HepG2 (cell line): ENCODE measurements at regions of chrX and their contacts with region 1.

Region 1: GRCh38 chrX:119235872-119236622 is at the start of gene PGRMC1:
- DNase-seq: peak; percentile 55
- ATAC-seq: peak; percentile 94
- H3K4me3 ChIP-seq: peak within 1 kb of the TSS; percentile 80
- H3K27ac ChIP-seq: peak within 1 kb of the TSS; percentile 75
- H3K4me1 ChIP-seq: peaks cover 42% of the 10 kb centered on the region
- H3K27me3 ChIP-seq: no peaks in the 10 kb centered on the region; a peak in 1 of 5 replicates
- CTCF ChIP-seq: no peak
- EP300 ChIP-seq: no peak
- POLR2A ChIP-seq: peak; percentile 87 to 95
- RAD21 ChIP-seq: no peak
- total RNA-seq, gene PGRMC1: 75.8 and 124 TPM in 2 replicates

Region 2: DNA sequence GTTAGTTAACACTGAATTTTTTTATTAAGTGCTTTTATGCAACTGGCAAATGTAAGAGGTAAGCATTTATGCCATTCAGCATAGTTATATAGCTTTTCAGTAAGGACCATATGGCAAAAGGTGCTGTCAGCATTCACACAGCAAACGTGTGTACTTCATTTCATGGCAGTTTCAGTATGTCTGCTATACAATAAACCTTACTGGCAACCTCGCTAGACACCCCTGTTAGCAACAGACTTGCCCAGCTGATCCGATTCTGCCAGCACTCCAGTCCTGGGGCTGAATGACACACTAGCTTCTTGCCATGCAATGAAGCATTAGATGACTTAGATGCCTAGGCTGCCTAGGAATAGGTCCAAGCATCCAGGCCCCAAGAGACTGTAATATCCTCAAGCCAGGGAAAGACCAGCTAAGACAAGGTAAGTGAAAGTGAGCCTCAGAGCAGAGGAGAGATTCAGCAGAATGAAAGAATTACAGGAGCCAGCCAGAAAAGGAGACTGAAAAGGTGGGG is 787.7 kb before region 1 on chrX:
- CTCF ChIA-PET with region 1: no interaction called
- POLR2A ChIA-PET with region 1: no interaction called
- in situ Hi-C with region 1: no loop called
- intact Hi-C with region 1: no loop called
- DNase-seq: no peak
- ATAC-seq: no peak
- H3K4me3 ChIP-seq: no peak overlapping the region
- H3K27ac ChIP-seq: no peak overlapping the region
- H3K4me1 ChIP-seq: no peaks in the 10 kb centered on the region
- H3K27me3 ChIP-seq: no peaks in the 10 kb centered on the region
- CTCF ChIP-seq: no peak
- EP300 ChIP-seq: no peak
- POLR2A ChIP-seq: no peak
- RAD21 ChIP-seq: no peak

Region 3: DNA sequence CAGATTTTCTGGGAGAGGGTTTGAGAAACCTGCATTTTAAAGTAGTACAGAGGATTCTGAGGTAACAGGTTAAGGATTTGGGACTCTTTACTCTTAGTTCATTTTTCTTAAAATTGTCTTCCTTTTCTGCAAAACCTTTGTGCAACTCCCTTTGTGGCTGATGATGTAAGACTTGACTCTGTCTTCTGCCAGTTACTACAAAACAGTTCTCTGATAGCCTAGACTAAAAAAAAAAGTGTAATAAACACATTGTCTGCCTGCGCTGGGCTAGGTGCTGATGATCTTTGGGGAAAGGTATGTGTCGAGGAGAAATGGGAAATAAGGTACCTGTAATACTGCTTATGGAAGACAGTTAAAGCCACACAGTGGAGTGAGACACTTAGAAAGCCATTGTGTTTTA is 479.9 kb before region 1 on chrX:
- CTCF ChIA-PET with region 1: no interaction called
- POLR2A ChIA-PET with region 1: no interaction called
- in situ Hi-C with region 1: no loop called
- intact Hi-C with region 1: loop called (anchors 5 kb)
- DNase-seq: no peak
- ATAC-seq: no peak
- H3K4me3 ChIP-seq: no peak overlapping the region
- H3K27ac ChIP-seq: no peak overlapping the region
- H3K4me1 ChIP-seq: no peaks in the 10 kb centered on the region
- H3K27me3 ChIP-seq: no peaks in the 10 kb centered on the region
- CTCF ChIP-seq: no peak
- EP300 ChIP-seq: no peak
- POLR2A ChIP-seq: no peak
- RAD21 ChIP-seq: no peak

Region 4: DNA sequence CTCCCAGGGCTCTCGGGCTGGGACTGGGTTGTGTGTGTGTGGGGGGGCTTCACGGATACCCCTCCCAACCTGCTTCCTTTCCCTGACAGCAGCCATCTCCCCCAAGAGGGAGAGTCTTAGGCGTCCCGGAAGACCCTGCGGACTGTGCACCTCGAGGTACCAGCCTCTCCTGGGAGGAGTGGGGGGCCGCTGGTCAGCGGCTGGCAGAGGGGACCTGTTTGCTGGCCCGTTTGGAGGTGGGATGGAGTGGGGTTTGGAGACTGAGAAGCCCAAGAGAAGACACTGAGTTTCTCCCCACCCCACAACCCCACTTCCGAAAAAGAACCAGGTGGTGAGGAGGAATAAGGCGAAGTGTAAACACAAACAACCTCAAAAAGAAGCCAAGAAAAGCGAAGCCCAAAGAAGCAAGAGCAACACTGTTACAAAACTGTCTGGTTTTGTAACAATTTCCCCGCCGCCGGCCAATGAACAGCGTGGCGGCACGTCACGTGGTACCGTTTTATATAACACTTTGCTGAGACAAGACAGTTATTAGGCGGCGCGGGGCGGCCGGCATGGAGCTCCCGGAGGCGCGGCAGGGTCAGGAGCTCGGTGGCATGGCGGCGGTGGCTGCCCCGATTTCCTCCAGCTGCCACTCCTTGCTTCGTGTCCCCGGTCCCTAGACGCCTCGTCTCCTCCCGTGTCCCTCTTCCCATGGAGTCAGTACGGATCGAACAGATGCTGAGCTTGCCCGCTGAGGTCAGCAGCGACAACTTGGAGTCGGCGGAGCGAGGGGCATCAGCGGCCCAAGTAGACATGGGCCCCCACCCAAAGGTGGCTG is 261.7 kb before region 1 on chrX and contains the start of gene LONRF3:
- CTCF ChIA-PET with region 1: no interaction called
- POLR2A ChIA-PET with region 1: no interaction called
- in situ Hi-C with region 1: no loop called
- intact Hi-C with region 1: loop called (anchors 10 kb)
- DNase-seq: peak; percentile 58
- ATAC-seq: peak; percentile 52
- H3K4me3 ChIP-seq: peak within 1 kb of the TSS; percentile 55 to 72 (median 69)
- H3K27ac ChIP-seq: peak within 1 kb of the TSS; percentile 67
- H3K4me1 ChIP-seq: peaks cover 29% of the 10 kb centered on the region
- H3K27me3 ChIP-seq: peaks cover 0 to 17% of the 10 kb centered on the region in 2 experiments; a peak in 3 of 5 replicates
- CTCF ChIP-seq: no peak
- EP300 ChIP-seq: no peak
- POLR2A ChIP-seq: peak; percentile 77 to 81
- RAD21 ChIP-seq: no peak
- total RNA-seq, gene LONRF3: 11.6 and 13.3 TPM in 2 replicates

Region 5: DNA sequence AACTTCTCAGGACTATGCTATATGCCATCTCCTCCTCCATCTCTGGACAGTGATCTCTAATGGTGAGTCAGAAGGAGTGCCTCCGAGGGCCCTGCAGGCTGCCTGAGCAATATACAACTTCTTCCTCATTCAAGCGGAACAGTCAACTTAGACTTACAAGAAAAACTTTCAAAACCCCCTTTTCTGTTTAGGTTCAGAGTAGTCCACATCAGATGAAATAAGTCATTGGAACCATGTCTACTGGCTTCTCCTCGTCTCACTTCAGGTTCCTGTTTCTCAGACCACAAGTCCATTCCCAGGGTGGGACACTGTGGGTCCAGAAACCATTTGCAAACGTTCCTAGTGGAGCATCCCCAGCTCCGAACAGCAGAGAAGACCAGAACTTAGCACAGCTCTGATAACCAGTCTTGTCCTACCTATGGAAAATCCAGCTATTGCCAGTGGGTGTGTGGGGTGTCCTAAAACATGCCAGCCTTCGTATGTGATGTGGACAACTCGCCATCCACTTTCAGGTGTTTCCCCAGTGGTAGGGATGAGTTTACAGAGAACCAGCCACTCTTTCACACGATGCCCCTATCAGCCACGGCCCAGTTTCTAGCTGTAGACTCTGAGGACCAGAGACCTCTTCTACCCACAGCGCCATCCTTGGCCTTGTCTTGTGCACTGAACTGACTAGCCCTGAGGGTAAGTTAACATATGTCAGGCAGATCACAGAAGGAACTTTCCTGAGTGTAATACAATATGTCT is 402.9 kb after region 1 on chrX:
- CTCF ChIA-PET with region 1: no interaction called
- POLR2A ChIA-PET with region 1: no interaction called
- in situ Hi-C with region 1: no loop called
- intact Hi-C with region 1: no loop called
- DNase-seq: no peak
- ATAC-seq: no peak
- H3K4me3 ChIP-seq: no peak overlapping the region
- H3K27ac ChIP-seq: no peak overlapping the region
- H3K4me1 ChIP-seq: peaks cover 6% of the 10 kb centered on the region; the same call in 1 of the 2 replicates
- H3K27me3 ChIP-seq: no peaks in the 10 kb centered on the region
- CTCF ChIP-seq: no peak
- EP300 ChIP-seq: no peak
- POLR2A ChIP-seq: no peak
- RAD21 ChIP-seq: no peak